ENCODE measurements at regions of chr22 and their contacts with region 1.

Region 1: DNA sequence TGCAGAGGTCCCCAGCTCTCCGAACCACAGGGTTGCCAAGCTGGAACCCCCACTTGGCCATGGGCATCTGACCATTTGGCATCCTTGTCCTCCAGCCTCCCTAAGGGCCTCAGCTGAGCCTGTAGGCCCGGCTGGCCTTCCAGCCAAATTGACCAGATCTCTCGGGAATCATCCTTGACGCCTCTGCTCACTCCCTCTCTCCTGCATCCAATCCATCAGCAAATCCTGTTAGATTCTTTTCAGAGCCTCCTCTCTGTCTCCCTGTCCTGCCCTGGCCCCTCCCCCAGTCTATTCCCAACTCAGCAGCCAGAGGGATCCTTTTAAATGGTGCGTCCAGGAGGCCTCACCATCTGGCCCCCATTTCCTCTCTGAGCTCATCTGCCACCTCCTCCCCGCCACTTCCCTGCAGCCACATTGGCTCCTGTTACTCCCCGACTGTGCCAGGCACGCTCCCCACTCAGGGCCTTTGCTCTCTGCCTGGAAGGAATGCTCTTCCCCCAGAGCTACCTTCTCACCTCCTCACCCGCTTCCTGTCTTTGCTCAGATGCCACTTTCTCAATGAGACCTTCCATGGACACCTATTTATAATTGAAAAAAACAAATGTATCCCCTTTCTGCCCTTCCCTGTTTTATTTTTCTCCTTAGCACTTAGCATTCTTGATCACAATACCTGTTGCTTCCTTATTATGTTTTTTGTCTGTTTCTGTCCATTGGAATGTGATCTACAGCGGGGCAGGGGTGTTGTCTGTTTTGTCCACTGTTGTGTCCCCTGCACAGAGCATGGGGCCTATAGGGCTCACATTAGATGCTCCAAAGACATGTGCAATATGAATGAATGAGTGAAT is 78.1 kb downstream of the NFAM1 start:
- DNase-seq: no peak
- H3K4me3 Mint-ChIP-seq: no peak overlapping the region
- H3K27ac Mint-ChIP-seq: no peak overlapping the region
- H3K4me1 Mint-ChIP-seq: no peaks in the 10 kb centered on the region
- H3K27me3 Mint-ChIP-seq: peaks cover 40% of the 10 kb centered on the region
- CTCF ChIP-seq: no peak

Region 2: GRCh38 chr22:42270512-42271417 is 83.3 kb before region 1 on chr22 and contains the start of gene TCF20:
- CTCF ChIA-PET with region 1: no interaction called
- intact Hi-C with region 1: no loop called
- DNase-seq: peak; percentile 80
- H3K4me3 Mint-ChIP-seq: peak within 1 kb of the TSS; percentile 97
- H3K27ac Mint-ChIP-seq: peak within 1 kb of the TSS; percentile 78
- H3K4me1 Mint-ChIP-seq: peaks cover 9% of the 10 kb centered on the region
- H3K27me3 Mint-ChIP-seq: no peaks in the 10 kb centered on the region
- CTCF ChIP-seq: no peak
- total RNA-seq, gene TCF20: 87.2 and 96.0 TPM in 2 replicates

Region 3: DNA sequence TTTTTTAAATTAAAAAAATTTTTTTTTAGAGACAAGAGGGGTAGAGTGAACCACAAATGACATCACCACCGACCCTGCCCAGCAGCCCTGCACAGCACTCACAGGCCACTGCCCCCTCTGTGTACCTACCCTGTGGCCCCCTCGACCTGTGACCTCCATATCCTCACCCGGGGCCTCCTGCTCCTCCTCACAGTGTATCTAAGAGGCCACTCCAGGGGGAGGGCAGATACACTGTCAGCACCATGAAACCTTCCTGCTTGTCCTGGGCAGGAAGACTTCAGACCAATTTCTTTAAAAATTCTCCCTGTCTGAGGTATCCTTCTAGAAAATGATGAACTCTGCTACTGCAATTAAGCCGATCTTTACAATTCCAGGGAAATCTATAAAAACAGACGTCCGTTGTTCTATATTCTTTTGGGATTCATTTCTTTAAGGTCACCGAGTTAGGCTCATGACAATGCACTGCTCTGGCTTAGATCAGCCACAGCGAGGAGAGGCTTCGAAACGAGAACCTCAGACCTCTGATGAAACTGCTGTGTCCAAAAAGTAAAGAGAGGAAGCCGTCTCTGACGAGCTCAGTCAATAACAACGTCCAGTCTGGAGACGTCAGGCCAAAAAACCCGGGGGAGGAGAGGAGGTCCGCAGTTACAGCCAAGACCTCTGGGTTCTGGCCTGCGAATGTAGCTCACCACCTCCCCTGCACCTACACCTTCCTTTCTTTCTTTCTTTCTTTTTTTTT is 60.6 kb after region 1 on chr22:
- CTCF ChIA-PET with region 1: interaction called, 11 read pairs
- intact Hi-C with region 1: no loop called
- DNase-seq: no peak
- H3K4me3 Mint-ChIP-seq: no peak overlapping the region
- H3K27ac Mint-ChIP-seq: no peak overlapping the region
- H3K4me1 Mint-ChIP-seq: no peaks in the 10 kb centered on the region
- H3K27me3 Mint-ChIP-seq: peaks cover 75% of the 10 kb centered on the region
- CTCF ChIP-seq: no peak

Region 4: DNA sequence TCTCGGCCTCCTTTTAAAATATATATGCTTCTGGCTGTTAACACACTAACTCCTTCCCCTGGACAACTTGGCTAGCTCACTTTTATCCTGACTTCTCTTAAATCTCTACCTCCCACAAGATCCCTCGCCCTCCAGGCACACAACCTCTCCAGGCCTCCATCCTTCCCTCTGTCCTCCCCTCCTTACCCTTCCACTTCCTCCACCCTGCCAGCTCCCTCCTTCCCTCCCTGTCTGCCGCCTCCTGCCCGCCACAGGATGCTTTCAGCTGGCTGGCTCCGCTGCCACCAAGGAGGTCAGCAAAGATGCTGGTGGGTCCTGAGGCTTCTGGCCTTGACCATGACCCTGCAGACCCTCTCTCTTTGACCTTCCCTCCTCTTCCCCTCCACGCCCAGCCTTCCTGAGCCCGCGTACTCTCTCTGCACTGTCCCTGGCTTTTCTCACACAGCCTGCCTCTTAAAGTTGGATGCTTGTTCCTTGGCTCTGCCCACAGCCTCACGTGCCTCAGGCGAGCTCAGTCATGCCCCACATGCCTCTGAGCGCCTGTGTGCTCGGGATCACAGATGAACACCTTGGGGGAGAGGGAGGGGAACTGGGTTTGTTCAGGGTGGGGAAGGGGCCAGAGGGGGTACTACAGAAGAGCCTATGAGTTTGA is 71.4 kb after region 1 on chr22:
- CTCF ChIA-PET with region 1: no interaction called
- intact Hi-C with region 1: no loop called
- DNase-seq: no peak
- H3K4me3 Mint-ChIP-seq: no peak overlapping the region
- H3K27ac Mint-ChIP-seq: no peak overlapping the region
- H3K4me1 Mint-ChIP-seq: no peaks in the 10 kb centered on the region
- H3K27me3 Mint-ChIP-seq: peaks cover 71% of the 10 kb centered on the region
- CTCF ChIP-seq: no peak

Region 5: GRCh38 chr22:42437488-42438292 is 83.6 kb after region 1 on chr22:
- CTCF ChIA-PET with region 1: no interaction called
- intact Hi-C with region 1: no loop called
- DNase-seq: peak; percentile 85
- H3K4me3 Mint-ChIP-seq: peak overlapping the region; percentile 72
- H3K27ac Mint-ChIP-seq: no peak overlapping the region
- H3K4me1 Mint-ChIP-seq: peaks cover 23% of the 10 kb centered on the region
- H3K27me3 Mint-ChIP-seq: peaks cover 19% of the 10 kb centered on the region
- CTCF ChIP-seq: peak; percentile 99

Region 6: GRCh38 chr22:42587588-42588175 is 233.6 kb after region 1 on chr22:
- CTCF ChIA-PET with region 1: no interaction called
- intact Hi-C with region 1: no loop called
- DNase-seq: no peak
- H3K4me3 Mint-ChIP-seq: no peak overlapping the region
- H3K27ac Mint-ChIP-seq: no peak overlapping the region
- H3K4me1 Mint-ChIP-seq: no peaks in the 10 kb centered on the region
- H3K27me3 Mint-ChIP-seq: no peaks in the 10 kb centered on the region
- CTCF ChIP-seq: no peak